ENCODE measurements at regions of chr15 and their contacts with region 1.

Region 1: GRCh38 chr15:77543159-77543882 is 89.4 kb downstream of the LINGO1 start:
- DNase-seq: peak; percentile 90
- ATAC-seq: peak; percentile 76
- H3K4me3 Mint-ChIP-seq: no peak overlapping the region; the same call in 1 of the 2 replicates
- H3K27ac Mint-ChIP-seq: 0 out of 2 replicates have a peak overlapping the region, but pooled peaks have one; percentile 53
- H3K4me1 Mint-ChIP-seq: peaks cover 49% of the 10 kb centered on the region
- H3K27me3 Mint-ChIP-seq: peaks cover 5% of the 10 kb centered on the region
- CTCF ChIP-seq: peak; percentile 87

Region 2: GRCh38 chr15:77034695-77035489 is 508.4 kb before region 1 on chr15:
- CTCF ChIA-PET with region 1: interaction called, 16 read pairs
- POLR2A ChIA-PET with region 1: no interaction called
- DNase-seq: peak; percentile 83
- ATAC-seq: peak; percentile 68
- H3K4me3 Mint-ChIP-seq: no peak overlapping the region
- H3K27ac Mint-ChIP-seq: no peak overlapping the region
- H3K4me1 Mint-ChIP-seq: peaks cover 12% of the 10 kb centered on the region
- H3K27me3 Mint-ChIP-seq: peaks cover 3% of the 10 kb centered on the region
- CTCF ChIP-seq: peak; percentile 71

Region 3: DNA sequence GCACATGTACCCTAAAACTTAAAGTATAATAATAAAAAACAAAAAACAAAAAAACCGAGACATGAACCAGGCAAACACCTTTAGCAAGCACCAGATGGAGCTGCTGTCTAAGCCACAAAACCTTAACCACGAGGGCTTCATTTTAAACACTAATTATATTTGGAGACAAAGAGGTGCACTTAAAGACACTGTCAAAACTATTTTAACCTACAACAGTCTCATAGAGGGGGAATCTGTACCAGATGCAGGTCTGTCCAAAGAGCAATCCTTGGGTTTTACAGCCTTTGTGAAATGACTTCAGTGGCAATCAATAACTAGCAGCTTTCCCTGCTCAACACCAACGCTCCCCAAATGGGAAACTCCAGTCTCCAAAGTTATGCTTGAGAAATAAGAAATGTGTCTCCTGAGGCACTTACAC is 356.7 kb before region 1 on chr15:
- CTCF ChIA-PET with region 1: interaction called, 110 read pairs
- POLR2A ChIA-PET with region 1: interaction called, 4 read pairs
- DNase-seq: no peak
- ATAC-seq: no peak
- H3K4me3 Mint-ChIP-seq: no peak overlapping the region
- H3K27ac Mint-ChIP-seq: no peak overlapping the region; the same call in 1 of the 2 replicates
- H3K4me1 Mint-ChIP-seq: peaks cover 2% of the 10 kb centered on the region; the same call in 1 of the 2 replicates
- H3K27me3 Mint-ChIP-seq: no peaks in the 10 kb centered on the region
- CTCF ChIP-seq: no peak

Region 4: GRCh38 chr15:77482570-77482969 is 60.8 kb before region 1 on chr15:
- CTCF ChIA-PET with region 1: interaction called, 28 read pairs
- POLR2A ChIA-PET with region 1: no interaction called
- DNase-seq: no peak
- ATAC-seq: no peak
- H3K4me3 Mint-ChIP-seq: no peak overlapping the region
- H3K27ac Mint-ChIP-seq: peak overlapping the region; percentile 88
- H3K4me1 Mint-ChIP-seq: peaks cover 56% of the 10 kb centered on the region
- H3K27me3 Mint-ChIP-seq: no peaks in the 10 kb centered on the region
- CTCF ChIP-seq: no peak

Region 5: GRCh38 chr15:77554306-77555080 is 11.2 kb after region 1 on chr15:
- CTCF ChIA-PET with region 1: interaction called, 13 read pairs
- POLR2A ChIA-PET with region 1: no interaction called
- DNase-seq: no peak
- ATAC-seq: no peak
- H3K4me3 Mint-ChIP-seq: no peak overlapping the region
- H3K27ac Mint-ChIP-seq: peak overlapping the region; percentile 21; the same call in 1 of the 2 replicates
- H3K4me1 Mint-ChIP-seq: peaks cover 24% of the 10 kb centered on the region
- H3K27me3 Mint-ChIP-seq: no peaks in the 10 kb centered on the region
- CTCF ChIP-seq: no peak

Region 6: GRCh38 chr15:77617476-77618230 is 74.3 kb after region 1 on chr15:
- CTCF ChIA-PET with region 1: interaction called, 20 read pairs
- POLR2A ChIA-PET with region 1: no interaction called
- DNase-seq: peak; percentile 56
- ATAC-seq: peak; percentile 49
- H3K4me3 Mint-ChIP-seq: no peak overlapping the region
- H3K27ac Mint-ChIP-seq: no peak overlapping the region; the same call in 1 of the 2 replicates
- H3K4me1 Mint-ChIP-seq: peaks cover 41% of the 10 kb centered on the region
- H3K27me3 Mint-ChIP-seq: no peaks in the 10 kb centered on the region; the same call in 1 of the 2 replicates
- CTCF ChIP-seq: peak; percentile 19; the same call in 1 of the 2 replicates